Activated CD4-positive, alpha-beta memory T cell treated with anti-CD3 and anti-CD28 coated beads, Interleukin-2, amount 10 ng/mL, durations not matched to agents 7 days and 5 days (primary cell): ENCODE measurements at regions of chr5 and their contacts with region 1.

Region 1: GRCh38 chr5:114449860-114450421 is 88.1 kb downstream of the KCNN2 start:
- DNase-seq: peak; percentile 34
- H3K4me3 Mint-ChIP-seq: no peak overlapping the region
- H3K27ac Mint-ChIP-seq: no peak overlapping the region
- H3K4me1 Mint-ChIP-seq: no peaks in the 10 kb centered on the region
- H3K27me3 Mint-ChIP-seq: peaks cover 2% of the 10 kb centered on the region

Region 2: GRCh38 chr5:113678924-113679575 is 770.9 kb before region 1 on chr5:
- CTCF ChIA-PET with region 1: interaction called, 11 read pairs
- POLR2A ChIA-PET with region 1: no interaction called
- DNase-seq: peak; percentile 23
- H3K4me3 Mint-ChIP-seq: no peak overlapping the region
- H3K27ac Mint-ChIP-seq: no peak overlapping the region
- H3K4me1 Mint-ChIP-seq: no peaks in the 10 kb centered on the region
- H3K27me3 Mint-ChIP-seq: no peaks in the 10 kb centered on the region